ENCODE measurements at regions of chr2 and their contacts with region 1.

Region 1: DNA sequence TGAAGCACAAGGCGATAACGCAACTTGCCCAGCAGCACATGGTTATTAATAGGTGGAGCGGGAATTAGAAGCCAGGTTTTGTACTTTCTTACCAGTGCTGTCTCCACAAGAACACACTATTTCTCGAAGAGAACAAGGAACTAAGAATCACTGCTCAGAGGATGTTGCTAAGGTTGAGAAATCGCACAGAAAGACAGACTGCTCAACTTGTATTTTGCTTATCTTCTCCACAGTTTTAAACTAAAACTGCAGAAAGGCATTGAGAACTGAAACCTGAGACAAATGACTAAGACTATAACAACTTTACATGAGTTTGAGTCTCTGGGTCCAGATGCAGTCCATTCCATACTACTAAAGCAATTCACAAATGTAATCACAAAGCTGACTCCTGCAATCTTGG is 6.2 kb downstream of the PRKD3 start:
- DNase-seq: no peak
- ATAC-seq: peak; percentile 85
- H3K4me3 Mint-ChIP-seq: peak overlapping the region; percentile 61
- H3K27ac Mint-ChIP-seq: peak overlapping the region; percentile 85
- H3K4me1 Mint-ChIP-seq: peaks cover 85% of the 10 kb centered on the region
- H3K27me3 Mint-ChIP-seq: no peaks in the 10 kb centered on the region
- CTCF ChIP-seq: no peak

Region 2: GRCh38 chr2:37306024-37306423 is 12.4 kb before region 1 on chr2:
- CTCF ChIA-PET with region 1: no interaction called
- POLR2A ChIA-PET with region 1: interaction called, 13 read pairs
- intact Hi-C with region 1: loop called (anchors 1 kb)
- DNase-seq: no peak
- ATAC-seq: no peak
- H3K4me3 Mint-ChIP-seq: no peak overlapping the region
- H3K27ac Mint-ChIP-seq: no peak overlapping the region
- H3K4me1 Mint-ChIP-seq: peaks cover 58% of the 10 kb centered on the region
- H3K27me3 Mint-ChIP-seq: no peaks in the 10 kb centered on the region
- CTCF ChIP-seq: no peak

Region 3: GRCh38 chr2:37414470-37414949 is 96.1 kb after region 1 on chr2:
- CTCF ChIA-PET with region 1: no interaction called
- POLR2A ChIA-PET with region 1: no interaction called
- intact Hi-C with region 1: no loop called
- DNase-seq: no peak
- ATAC-seq: peak; percentile 61
- H3K4me3 Mint-ChIP-seq: no peak overlapping the region
- H3K27ac Mint-ChIP-seq: no peak overlapping the region
- H3K4me1 Mint-ChIP-seq: peaks cover 6% of the 10 kb centered on the region
- H3K27me3 Mint-ChIP-seq: no peaks in the 10 kb centered on the region
- CTCF ChIP-seq: peak; percentile 60